ENCODE measurements at regions of chr3 and their contacts with region 1.

Region 1: GRCh38 chr3:121749276-121750086 is at the start of gene GOLGB1:
- DNase-seq: peak; percentile 79 to 98 (median 96)
- ATAC-seq: peak; percentile 96
- H3K4me3 ChIP-seq: peak within 1 kb of the TSS; percentile 78
- H3K4me3 Mint-ChIP-seq: peak within 1 kb of the TSS in 3 of 10 donors; percentile 5 to 58 (median 39)
- H3K27ac ChIP-seq: peak within 1 kb of the TSS; percentile 96
- H3K27ac Mint-ChIP-seq: peak within 1 kb of the TSS in 2 of 9 donors; percentile 19 to 36
- H3K4me1 ChIP-seq: peaks cover 4 to 11% of the 10 kb centered on the region in 2 donors
- H3K4me1 Mint-ChIP-seq: peaks cover 5 to 18% (median 10%) of the 10 kb centered on the region in 7 donors
- H3K27me3 ChIP-seq: no peaks in the 10 kb centered on the region
- H3K27me3 Mint-ChIP-seq: peaks cover 0 to 24% (median 14%) of the 10 kb centered on the region in 5 donors
- total RNA-seq, gene GOLGB1: 29.5 to 49.7 (median 44.5) TPM

Region 2: GRCh38 chr3:120596116-120596852 is 1153.2 kb before region 1 on chr3 and contains the start of gene NDUFB4:
- CTCF ChIA-PET with region 1: no interaction called
- POLR2A ChIA-PET with region 1: no interaction called
- intact Hi-C with region 1: loop called in 1 of 2 experiments (anchors 5 kb)
- DNase-seq: peak; percentile 84 to 97 (median 93)
- ATAC-seq: peak; percentile 97
- H3K4me3 ChIP-seq: peak within 1 kb of the TSS; percentile 99
- H3K4me3 Mint-ChIP-seq: peak within 1 kb of the TSS in 8 of 10 donors; percentile 85 to 99 (median 96)
- H3K27ac ChIP-seq: peak within 1 kb of the TSS; percentile 92
- H3K27ac Mint-ChIP-seq: peak within 1 kb of the TSS in 5 of 9 donors; percentile 94 to 99 (median 98)
- H3K4me1 ChIP-seq: peaks cover 25 to 27% of the 10 kb centered on the region in 2 donors
- H3K4me1 Mint-ChIP-seq: peaks cover 0 to 20% (median 11%) of the 10 kb centered on the region in 7 donors
- H3K27me3 ChIP-seq: no peaks in the 10 kb centered on the region
- H3K27me3 Mint-ChIP-seq: peaks cover 0 to 20% (median 0%) of the 10 kb centered on the region in 5 donors
- total RNA-seq, gene NDUFB4: 63.4 to 126 (median 76.2) TPM

Region 3: GRCh38 chr3:121690777-121691405 is 58.6 kb before region 1 on chr3:
- CTCF ChIA-PET with region 1: no interaction called
- POLR2A ChIA-PET with region 1: no interaction called
- intact Hi-C with region 1: loop called in 1 of 2 experiments (anchors 2 kb)
- DNase-seq: no peak
- ATAC-seq: no peak
- H3K4me3 ChIP-seq: no peak overlapping the region
- H3K4me3 Mint-ChIP-seq: peak overlapping the region in 1 of 10 donors; percentile 57
- H3K27ac ChIP-seq: no peak overlapping the region
- H3K27ac Mint-ChIP-seq: peak overlapping the region in 3 of 9 donors; percentile 16 to 72 (median 34)
- H3K4me1 ChIP-seq: no peaks in the 10 kb centered on the region
- H3K4me1 Mint-ChIP-seq: peaks cover 0 to 19% (median 0%) of the 10 kb centered on the region in 7 donors
- H3K27me3 ChIP-seq: no peaks in the 10 kb centered on the region
- H3K27me3 Mint-ChIP-seq: no peaks in the 10 kb centered on the region

Region 4: DNA sequence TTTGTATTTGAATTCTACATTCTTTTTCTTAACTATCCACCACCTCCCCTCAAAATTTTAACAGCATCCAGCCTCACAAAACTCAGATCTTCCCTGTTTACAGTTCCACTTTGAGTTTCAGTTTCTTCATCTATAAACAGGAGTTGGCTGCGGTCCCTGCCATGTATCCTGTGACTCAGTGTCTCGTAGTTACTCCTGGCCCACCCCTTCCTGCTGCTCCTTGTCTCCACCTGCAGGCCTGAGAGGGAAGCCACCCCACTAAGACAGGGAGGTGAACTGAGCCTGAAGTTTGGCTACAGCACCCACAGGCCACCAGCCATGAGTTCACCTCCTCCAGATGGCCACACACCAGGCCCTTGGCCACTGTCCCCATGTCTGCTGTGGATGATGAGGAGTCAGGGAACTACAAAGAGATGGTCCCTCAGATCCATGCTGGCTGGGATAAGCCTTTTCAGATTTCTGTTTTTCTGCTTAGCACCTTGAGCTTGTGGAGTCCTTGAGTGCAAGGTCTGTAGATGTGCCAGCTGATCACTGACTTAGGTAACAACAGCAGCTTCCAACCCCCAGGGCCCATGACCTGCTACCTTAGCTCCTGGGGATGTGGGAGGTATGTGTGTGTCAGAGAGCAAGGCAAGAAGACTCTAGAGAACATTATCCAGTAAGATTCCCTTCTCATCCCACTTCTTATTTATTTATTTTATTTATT is 343.1 kb after region 1 on chr3:
- CTCF ChIA-PET with region 1: no interaction called
- POLR2A ChIA-PET with region 1: no interaction called
- intact Hi-C with region 1: loop called in 1 of 2 experiments (anchors 10 kb)
- DNase-seq: peak in 1 of 9 donors; percentile 51
- ATAC-seq: peak; percentile 84
- H3K4me3 ChIP-seq: no peak overlapping the region
- H3K4me3 Mint-ChIP-seq: peak overlapping the region in 1 of 10 donors; percentile 51
- H3K27ac ChIP-seq: no peak overlapping the region
- H3K27ac Mint-ChIP-seq: peak overlapping the region in 1 of 9 donors; percentile 87
- H3K4me1 ChIP-seq: no peaks in the 10 kb centered on the region
- H3K4me1 Mint-ChIP-seq: peaks cover 0 to 31% (median 0%) of the 10 kb centered on the region in 7 donors
- H3K27me3 ChIP-seq: no peaks in the 10 kb centered on the region
- H3K27me3 Mint-ChIP-seq: peaks cover 0 to 4% (median 0%) of the 10 kb centered on the region in 5 donors

Region 5: DNA sequence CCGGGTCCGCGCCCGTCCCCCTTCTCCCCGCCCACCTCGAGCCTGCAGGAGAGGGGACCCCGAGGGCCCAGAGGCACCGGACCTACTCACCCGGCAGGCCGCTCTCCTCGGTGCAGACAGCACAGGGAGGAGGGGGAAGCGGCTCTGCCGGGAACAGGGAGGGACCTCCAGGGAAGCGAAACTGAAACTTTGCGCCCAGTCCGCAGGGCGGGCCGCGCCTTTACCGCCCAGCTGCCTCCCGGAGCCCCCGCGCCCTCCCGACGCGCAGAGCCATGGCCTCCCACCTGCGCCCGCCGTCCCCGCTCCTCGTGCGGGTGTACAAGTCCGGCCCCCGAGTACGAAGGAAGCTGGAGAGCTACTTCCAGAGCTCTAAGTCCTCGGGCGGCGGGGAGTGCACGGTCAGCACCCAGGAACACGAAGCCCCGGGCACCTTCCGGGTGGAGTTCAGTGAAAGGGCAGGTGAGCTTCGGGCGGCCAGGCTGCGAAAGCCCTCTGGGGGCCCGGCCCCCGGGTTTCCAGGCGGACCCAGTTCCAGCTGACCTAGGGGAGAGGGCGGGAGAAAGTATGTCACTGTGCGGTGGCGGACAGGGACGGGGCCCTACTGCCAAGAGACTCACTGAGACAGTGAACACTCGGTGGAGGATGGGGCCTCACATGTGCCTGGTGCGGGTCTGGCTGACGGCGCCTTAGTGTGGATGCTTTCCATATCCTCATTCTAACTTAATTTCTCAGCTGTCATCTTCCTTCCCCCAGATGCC is 814.9 kb after region 1 on chr3 and contains the starts of genes DTX3L and PARP9:
- CTCF ChIA-PET with region 1: no interaction called
- POLR2A ChIA-PET with region 1: no interaction called
- intact Hi-C with region 1: loop called in 1 of 2 experiments (anchors 2 kb)
- DNase-seq: peak; percentile 50 to 82 (median 77)
- ATAC-seq: peak; percentile 95
- H3K4me3 ChIP-seq: peak within 1 kb of the TSS; percentile 75
- H3K4me3 Mint-ChIP-seq: peak within 1 kb of the TSS; percentile 88 to 100 (median 98)
- H3K27ac ChIP-seq: peak within 1 kb of the TSS; percentile 98
- H3K27ac Mint-ChIP-seq: peak within 1 kb of the TSS; percentile 97 to 99 (median 98)
- H3K4me1 ChIP-seq: peaks cover 34 to 45% of the 10 kb centered on the region in 2 donors
- H3K4me1 Mint-ChIP-seq: peaks cover 58 to 91% (median 79%) of the 10 kb centered on the region in 7 donors
- H3K27me3 ChIP-seq: no peaks in the 10 kb centered on the region
- H3K27me3 Mint-ChIP-seq: no peaks in the 10 kb centered on the region
- total RNA-seq, gene DTX3L: 28.6 to 164 (median 35.8) TPM
- total RNA-seq, gene PARP9: 17.6 to 165 (median 24.4) TPM

Region 6: GRCh38 chr3:123584988-123585937 is 1835.8 kb after region 1 on chr3 and contains the start of gene HACD2:
- CTCF ChIA-PET with region 1: no interaction called
- POLR2A ChIA-PET with region 1: no interaction called
- intact Hi-C with region 1: loop called (anchors 1 kb)
- DNase-seq: peak; percentile 87 to 96 (median 90)
- ATAC-seq: peak; percentile 96
- H3K4me3 ChIP-seq: peak within 1 kb of the TSS; percentile 98
- H3K4me3 Mint-ChIP-seq: peak within 1 kb of the TSS in 3 of 10 donors; percentile 87 to 90 (median 89)
- H3K27ac ChIP-seq: peak within 1 kb of the TSS; percentile 79
- H3K27ac Mint-ChIP-seq: peak within 1 kb of the TSS; percentile 44 to 93 (median 83)
- H3K4me1 ChIP-seq: peaks cover 8 to 13% of the 10 kb centered on the region in 2 donors
- H3K4me1 Mint-ChIP-seq: peaks cover 14 to 32% (median 30%) of the 10 kb centered on the region in 7 donors
- H3K27me3 ChIP-seq: no peaks in the 10 kb centered on the region
- H3K27me3 Mint-ChIP-seq: no peaks in the 10 kb centered on the region
- total RNA-seq, gene HACD2: 15.9 to 28.3 (median 24.0) TPM